PC-3 (cell line): ENCODE measurements at regions of chr4 and their contacts with region 1.

Region 1: GRCh38 chr4:1883583-1883982 is 12.4 kb downstream of the NSD2 start:
- DNase-seq: no peak
- ATAC-seq: no peak
- H3K4me3 ChIP-seq: no peak overlapping the region
- H3K27ac ChIP-seq: no peak overlapping the region
- H3K4me1 ChIP-seq: peaks cover 6% of the 10 kb centered on the region; the same call in 1 of the 2 replicates
- H3K27me3 ChIP-seq: no peaks in the 10 kb centered on the region
- CTCF ChIP-seq: no peak

Region 2: DNA sequence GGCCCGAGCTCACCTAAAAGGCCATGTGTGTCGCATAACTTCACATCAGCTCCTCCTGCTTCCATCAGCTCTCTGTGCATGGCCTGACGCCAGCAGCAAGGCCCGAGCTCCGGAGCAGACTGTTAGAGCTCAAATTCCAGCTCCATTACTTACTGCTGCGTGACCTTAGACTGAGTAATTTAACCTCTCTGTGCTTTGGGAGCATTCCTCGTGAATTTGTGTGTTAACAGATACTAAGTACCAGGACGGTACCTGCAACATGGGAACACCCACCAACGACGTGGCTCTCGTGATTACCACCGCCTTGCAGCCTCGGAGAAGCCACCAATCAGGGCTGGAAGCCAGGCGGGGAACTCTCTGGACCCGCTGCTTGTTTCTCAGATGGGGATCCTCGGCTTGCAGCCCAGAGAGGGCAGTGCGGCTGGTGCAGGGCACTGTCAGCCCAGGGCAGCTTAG is 40.6 kb before region 1 on chr4:
- CTCF ChIA-PET with region 1: no interaction called
- POLR2A ChIA-PET with region 1: no interaction called
- intact Hi-C with region 1: no loop called
- DNase-seq: peak; percentile 47
- ATAC-seq: peak; percentile 77
- H3K4me3 ChIP-seq: no peak overlapping the region
- H3K27ac ChIP-seq: no peak overlapping the region
- H3K4me1 ChIP-seq: 0 out of 2 replicates have a peak, but pooled peaks cover 4% of the 10 kb centered on the region
- H3K27me3 ChIP-seq: no peaks in the 10 kb centered on the region
- CTCF ChIP-seq: no peak

Region 3: GRCh38 chr4:1856042-1856788 is 27.4 kb before region 1 on chr4 and contains the start of gene LETM1:
- CTCF ChIA-PET with region 1: no interaction called
- POLR2A ChIA-PET with region 1: interaction called, 12 read pairs
- intact Hi-C with region 1: no loop called
- DNase-seq: peak; percentile 91
- ATAC-seq: peak; percentile 97
- H3K4me3 ChIP-seq: peak within 1 kb of the TSS; percentile 87
- H3K27ac ChIP-seq: no peak within 1 kb of the TSS; the same call in 1 of the 2 replicates
- H3K4me1 ChIP-seq: peaks cover 9% of the 10 kb centered on the region; the same call in 1 of the 2 replicates
- H3K27me3 ChIP-seq: no peaks in the 10 kb centered on the region
- CTCF ChIP-seq: no peak
- total RNA-seq, gene LETM1: 86.3 and 129 TPM in 2 replicates